Sciatic nerve (tissue), 2 donors: ENCODE measurements at regions of chr21 and their contacts with region 1.

Region 1: DNA sequence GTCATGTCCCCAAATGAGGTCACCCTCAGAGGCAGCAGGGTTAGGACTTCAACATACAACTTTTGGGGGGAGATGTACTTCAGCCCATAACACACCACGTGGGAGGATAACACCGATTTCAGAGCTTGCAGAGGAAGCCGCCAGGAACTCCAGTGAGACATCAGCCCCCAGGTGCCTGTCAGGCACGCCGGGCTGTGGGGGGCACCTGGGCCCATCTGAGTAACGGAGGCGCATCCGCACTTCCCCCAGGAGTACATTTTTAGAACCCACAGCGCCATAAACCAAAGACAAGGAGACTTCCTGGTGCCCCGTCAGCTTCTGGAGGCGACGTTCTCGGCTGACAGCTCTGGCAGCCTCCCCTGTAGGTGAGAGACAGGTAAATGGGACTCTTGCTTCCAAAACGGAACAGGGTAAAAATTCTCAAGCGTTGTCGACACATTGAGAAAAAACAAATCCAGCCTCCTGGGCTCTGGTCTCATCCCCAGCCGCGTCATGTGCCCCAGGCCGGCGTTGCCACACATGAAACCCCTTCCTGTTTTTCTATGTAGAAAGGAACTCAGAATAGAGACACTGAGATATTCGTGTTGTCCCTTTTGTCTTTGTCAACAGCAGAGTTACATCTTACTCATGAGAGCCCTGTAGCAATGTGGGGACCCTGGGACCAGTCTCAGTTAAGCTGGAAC is 93.3 kb downstream of the PDE9A start:
- DNase-seq: no peak
- ATAC-seq: peak; percentile 9

Region 2: DNA sequence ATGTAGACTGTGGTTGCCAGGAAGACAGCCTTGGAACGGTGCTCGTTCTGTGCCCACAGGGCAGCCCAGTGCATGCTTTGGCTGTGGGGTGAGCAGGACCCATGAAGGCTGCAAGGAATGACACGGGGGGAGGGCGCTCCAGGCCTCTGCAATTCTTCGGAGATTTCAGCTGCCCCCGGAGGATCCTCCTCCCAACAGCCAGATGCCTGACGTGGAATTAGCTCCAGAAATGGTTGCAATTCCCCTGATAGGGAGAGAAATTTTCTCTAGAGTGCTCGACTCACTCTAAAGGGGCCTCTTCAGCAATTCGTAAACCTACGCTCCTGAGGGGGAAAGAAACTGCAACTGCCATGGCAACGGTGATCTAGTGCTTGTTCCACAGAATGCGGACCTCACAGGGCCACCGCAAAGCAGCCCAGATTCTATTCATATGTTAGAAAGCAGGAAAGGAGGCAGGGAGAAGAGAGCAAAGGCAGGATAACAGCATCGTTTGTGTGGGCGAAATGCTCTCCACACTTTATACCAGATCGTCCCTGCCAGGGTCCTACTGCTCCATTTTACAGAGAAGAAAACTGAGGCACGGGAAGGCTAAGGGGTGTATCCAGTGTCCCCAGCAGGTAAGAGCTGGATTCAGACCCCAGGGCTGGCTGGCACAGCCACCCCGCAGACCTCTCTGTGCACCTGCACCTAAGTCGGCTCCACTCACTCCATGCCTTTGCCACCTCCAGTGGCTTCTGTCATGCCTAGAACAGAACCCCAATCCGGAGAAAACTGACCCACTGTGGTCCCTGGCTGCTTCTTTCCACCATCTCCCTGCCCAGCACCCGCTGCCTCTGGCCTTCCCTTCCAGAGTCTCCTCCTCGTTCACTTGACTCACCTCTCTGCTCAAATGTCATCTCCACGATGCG is 105.2 kb before region 1 on chr21:
- intact Hi-C with region 1: no loop called
- DNase-seq: no peak
- ATAC-seq: peak; percentile 48

Region 3: DNA sequence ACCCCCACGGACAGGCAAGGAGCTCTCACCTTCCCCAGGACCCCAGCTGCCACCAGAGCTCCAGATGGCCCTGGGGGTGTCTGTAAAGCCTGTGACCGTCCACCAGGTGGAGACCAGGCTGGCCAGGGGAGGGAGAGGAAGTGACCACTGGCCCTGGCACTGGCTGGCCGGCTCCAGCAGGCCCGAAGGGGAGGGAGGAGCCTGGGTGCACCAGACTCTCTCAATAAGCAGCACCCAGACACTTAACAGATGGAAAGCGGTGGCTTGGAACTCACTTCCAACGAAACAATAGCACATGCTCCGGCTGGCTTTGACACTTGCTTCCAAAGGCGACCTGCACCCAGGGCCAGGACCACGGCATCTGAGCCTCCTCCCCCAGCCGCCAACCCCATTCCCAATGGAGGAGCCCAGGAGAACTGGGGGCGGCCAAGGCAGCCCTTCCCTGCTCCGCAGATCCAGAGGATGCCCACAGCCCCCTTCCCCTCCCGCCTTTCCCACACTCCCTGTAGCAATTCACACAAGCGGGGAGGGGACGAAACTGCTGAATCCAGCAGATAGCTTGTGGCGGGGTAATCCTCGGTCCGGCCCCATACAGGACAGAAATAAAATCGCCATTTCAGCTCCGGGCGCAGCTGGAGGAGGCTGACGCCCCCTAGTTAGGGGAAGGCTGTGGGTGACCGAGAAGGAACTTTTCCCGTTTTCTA is 94.1 kb before region 1 on chr21:
- intact Hi-C with region 1: loop called (anchors 10 kb)
- DNase-seq: peak; percentile 80
- ATAC-seq: peak; percentile 85